Common myeloid progenitor, CD34-positive (primary cell): ENCODE measurements at regions of chr3 and their contacts with region 1.

Region 1: GRCh38 chr3:186108941-186109865 is at the start of gene ETV5:
- DNase-seq: peak; percentile 99
- H3K4me3 ChIP-seq: peak within 1 kb of the TSS; percentile 45 to 83 (median 73)
- H3K27ac ChIP-seq: no peak within 1 kb of the TSS
- H3K4me1 ChIP-seq: peaks cover 11 to 48% (median 42%) of the 10 kb centered on the region in 4 experiments
- H3K27me3 ChIP-seq: peaks cover 5 to 41% (median 13%) of the 10 kb centered on the region in 5 experiments

Region 2: GRCh38 chr3:186097663-186098451 is 11.3 kb before region 1 on chr3:
- CTCF ChIA-PET with region 1: interaction called, 11 read pairs
- POLR2A ChIA-PET with region 1: no interaction called
- DNase-seq: peak; percentile 53 to 88 (median 85)
- H3K4me3 ChIP-seq: peak overlapping the region in 6 of 7 experiments; percentile 24 to 77 (median 50)
- H3K27ac ChIP-seq: no peak overlapping the region
- H3K4me1 ChIP-seq: peaks cover 0 to 29% (median 12%) of the 10 kb centered on the region in 4 experiments
- H3K27me3 ChIP-seq: no peaks in the 10 kb centered on the region

Region 3: GRCh38 chr3:186254676-186255650 is 145.8 kb after region 1 on chr3:
- CTCF ChIA-PET with region 1: no interaction called
- POLR2A ChIA-PET with region 1: no interaction called
- DNase-seq: peak; percentile 48 to 92 (median 88)
- H3K4me3 ChIP-seq: peak overlapping the region in 4 of 7 experiments; percentile 12 to 33 (median 19)
- H3K27ac ChIP-seq: no peak overlapping the region
- H3K4me1 ChIP-seq: peaks cover 7 to 42% (median 30%) of the 10 kb centered on the region in 4 experiments
- H3K27me3 ChIP-seq: no peaks in the 10 kb centered on the region